ENCODE measurements at regions of chr7 and their contacts with region 1.

Region 1: GRCh38 chr7:35537067-35538023 is 157.6 kb downstream of the HERPUD2 start:
- DNase-seq: peak; percentile 84
- ATAC-seq: peak; percentile 99
- H3K4me3 Mint-ChIP-seq: peak overlapping the region; percentile 70
- H3K27ac Mint-ChIP-seq: no peak overlapping the region
- H3K4me1 Mint-ChIP-seq: no peaks in the 10 kb centered on the region
- H3K27me3 Mint-ChIP-seq: peaks cover 2% of the 10 kb centered on the region
- CTCF ChIP-seq: peak; percentile 94

Region 2: DNA sequence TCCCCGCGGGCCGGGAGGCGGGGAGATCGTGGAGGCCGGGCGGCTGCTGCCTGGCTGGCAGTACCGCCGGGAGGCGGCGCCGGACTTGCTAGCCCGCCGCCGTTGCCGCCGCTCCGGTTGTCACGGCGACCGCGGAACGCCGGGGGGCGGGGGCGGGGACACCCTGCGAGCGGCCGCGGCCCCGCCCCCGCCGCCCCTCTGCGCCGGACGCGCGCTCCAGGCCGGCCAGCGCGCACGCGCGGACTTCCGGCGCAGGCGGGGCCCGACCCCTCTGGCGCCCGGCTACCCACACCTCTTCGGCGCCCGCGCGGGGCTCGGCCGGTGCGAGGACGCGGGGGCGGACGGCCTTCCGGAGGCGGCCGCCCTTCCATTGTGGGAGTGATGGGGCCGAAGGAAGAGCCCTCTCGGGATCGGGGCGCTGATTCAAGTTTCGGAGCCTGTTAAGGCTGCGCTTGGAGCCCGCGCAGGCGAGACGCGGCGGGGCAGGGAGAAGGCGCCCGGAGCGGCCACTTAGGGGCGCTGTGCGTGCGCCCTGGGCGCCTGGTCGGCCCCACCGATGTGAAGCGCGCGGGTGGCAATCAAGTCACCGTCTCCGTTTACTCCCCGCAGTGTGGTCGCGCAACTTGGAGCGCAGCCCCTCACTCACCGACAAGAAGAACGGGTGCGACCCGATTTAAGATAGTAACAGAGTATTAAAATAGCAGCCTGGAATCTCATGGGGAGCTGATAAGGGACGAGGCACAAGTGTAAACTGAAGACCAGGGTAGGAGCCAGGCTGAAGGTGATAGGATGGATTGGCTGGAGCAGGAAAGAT is 499.6 kb before region 1 on chr7:
- CTCF ChIA-PET with region 1: no interaction called
- POLR2A ChIA-PET with region 1: no interaction called
- intact Hi-C with region 1: loop called (anchors 10 kb)
- DNase-seq: peak; percentile 91
- ATAC-seq: peak; percentile 78
- H3K4me3 Mint-ChIP-seq: peak overlapping the region; percentile 77
- H3K27ac Mint-ChIP-seq: peak overlapping the region; percentile 82
- H3K4me1 Mint-ChIP-seq: peaks cover 26% of the 10 kb centered on the region
- H3K27me3 Mint-ChIP-seq: no peaks in the 10 kb centered on the region
- CTCF ChIP-seq: peak; percentile 76